ENCODE measurements at regions of chr5 and their contacts with region 1.

Region 1: DNA sequence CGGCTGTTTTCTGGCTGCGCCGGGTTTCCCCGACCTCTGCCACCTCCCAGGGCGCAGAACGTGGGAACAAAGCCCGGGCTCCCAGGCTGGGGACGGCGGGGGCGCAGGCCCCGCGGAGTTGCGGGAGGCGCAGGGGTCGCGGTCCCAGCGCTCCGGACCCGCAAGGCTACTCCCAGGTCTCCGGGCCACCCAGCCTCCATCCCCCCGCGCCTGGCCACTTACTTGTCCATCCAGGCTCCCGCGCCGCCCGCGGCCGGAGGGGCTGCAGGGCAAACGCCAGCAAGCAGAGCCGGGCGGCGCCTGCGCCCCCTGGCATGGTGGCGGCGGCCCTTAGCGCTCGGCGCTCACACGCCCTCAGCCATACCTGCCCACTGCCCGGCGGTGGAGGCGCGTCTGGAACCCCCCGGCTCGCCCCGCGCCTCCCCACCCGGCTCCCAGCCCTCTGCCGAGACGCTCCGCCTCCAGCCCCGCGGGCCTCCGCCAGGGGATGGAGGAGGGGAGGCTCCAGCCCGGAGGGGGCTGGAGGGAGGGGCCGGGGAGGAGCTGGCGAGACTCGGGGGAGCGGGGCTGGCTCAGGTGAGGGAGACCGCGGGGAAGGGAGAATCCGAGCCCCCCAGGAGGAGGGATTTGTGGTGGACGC is at the start of gene ADAM19:
- DNase-seq: peak; percentile 83
- H3K4me3 ChIP-seq: peak within 1 kb of the TSS; percentile 77 to 89 (median 79)
- H3K27ac ChIP-seq: peak within 1 kb of the TSS; percentile 91 to 95 (median 94)
- H3K4me1 ChIP-seq: peaks cover 0 to 45% (median 34%) of the 10 kb centered on the region in 4 donors
- H3K27me3 ChIP-seq: no peaks in the 10 kb centered on the region
- CTCF ChIP-seq: peak; percentile 9 to 52 (median 32)
- EP300 ChIP-seq: no peak
- POLR2A ChIP-seq: peak in 1 of 2 donors; percentile 62
- total RNA-seq, gene ADAM19: 18.8 to 53.2 (median 35.0) TPM

Region 2: GRCh38 chr5:157431544-157432200 is 143.8 kb before region 1 on chr5:
- intact Hi-C with region 1: loop called (anchors 5 kb)
- DNase-seq: no peak
- H3K4me3 ChIP-seq: no peak overlapping the region
- H3K27ac ChIP-seq: peak overlapping the region in 3 of 4 donors; percentile 7 to 41 (median 22)
- H3K4me1 ChIP-seq: no peaks in the 10 kb centered on the region
- H3K27me3 ChIP-seq: no peaks in the 10 kb centered on the region
- CTCF ChIP-seq: peak in 3 of 4 experiments; percentile 46 to 53 (median 52)
- EP300 ChIP-seq: no peak
- POLR2A ChIP-seq: no peak

Region 3: DNA sequence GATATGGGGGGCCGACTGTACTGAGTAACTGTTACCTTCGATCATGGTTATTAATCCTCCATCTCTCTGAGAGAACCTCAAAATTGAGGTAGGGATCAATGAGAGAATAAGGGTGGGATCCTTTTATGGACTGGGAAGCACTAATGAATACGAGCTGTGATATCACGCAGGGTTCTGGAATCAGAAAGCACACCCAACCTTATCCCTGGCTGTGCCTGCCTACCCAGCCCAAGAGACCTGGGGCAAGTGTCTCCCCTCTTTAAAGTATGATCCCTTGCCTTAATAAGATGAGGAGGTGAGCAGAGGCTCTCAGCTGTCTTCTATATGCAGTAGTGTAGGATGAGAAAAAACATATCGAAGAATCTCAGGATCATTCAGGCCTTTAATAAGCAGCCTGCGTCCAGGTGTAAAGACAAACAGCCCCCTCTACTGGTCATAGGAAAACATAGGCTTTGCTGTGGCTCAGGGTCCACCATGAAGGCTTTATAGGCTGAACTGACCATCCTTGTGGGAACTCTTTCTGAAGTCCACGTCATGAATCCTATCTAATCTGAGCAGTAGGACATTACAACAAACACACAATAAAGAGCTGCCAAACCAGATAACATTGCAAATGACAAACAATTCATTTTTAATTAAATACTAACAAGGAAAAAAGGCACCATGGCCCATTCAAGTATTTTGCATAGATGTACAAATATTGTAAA is 98.6 kb before region 1 on chr5:
- intact Hi-C with region 1: loop called (anchors 2 kb)
- DNase-seq: peak; percentile 67
- H3K4me3 ChIP-seq: no peak overlapping the region
- H3K27ac ChIP-seq: peak overlapping the region; percentile 38 to 88 (median 84)
- H3K4me1 ChIP-seq: peaks cover 0 to 86% (median 53%) of the 10 kb centered on the region in 4 donors
- H3K27me3 ChIP-seq: no peaks in the 10 kb centered on the region
- CTCF ChIP-seq: peak; percentile 68 to 88 (median 80)
- EP300 ChIP-seq: no peak
- POLR2A ChIP-seq: no peak

Region 4: DNA sequence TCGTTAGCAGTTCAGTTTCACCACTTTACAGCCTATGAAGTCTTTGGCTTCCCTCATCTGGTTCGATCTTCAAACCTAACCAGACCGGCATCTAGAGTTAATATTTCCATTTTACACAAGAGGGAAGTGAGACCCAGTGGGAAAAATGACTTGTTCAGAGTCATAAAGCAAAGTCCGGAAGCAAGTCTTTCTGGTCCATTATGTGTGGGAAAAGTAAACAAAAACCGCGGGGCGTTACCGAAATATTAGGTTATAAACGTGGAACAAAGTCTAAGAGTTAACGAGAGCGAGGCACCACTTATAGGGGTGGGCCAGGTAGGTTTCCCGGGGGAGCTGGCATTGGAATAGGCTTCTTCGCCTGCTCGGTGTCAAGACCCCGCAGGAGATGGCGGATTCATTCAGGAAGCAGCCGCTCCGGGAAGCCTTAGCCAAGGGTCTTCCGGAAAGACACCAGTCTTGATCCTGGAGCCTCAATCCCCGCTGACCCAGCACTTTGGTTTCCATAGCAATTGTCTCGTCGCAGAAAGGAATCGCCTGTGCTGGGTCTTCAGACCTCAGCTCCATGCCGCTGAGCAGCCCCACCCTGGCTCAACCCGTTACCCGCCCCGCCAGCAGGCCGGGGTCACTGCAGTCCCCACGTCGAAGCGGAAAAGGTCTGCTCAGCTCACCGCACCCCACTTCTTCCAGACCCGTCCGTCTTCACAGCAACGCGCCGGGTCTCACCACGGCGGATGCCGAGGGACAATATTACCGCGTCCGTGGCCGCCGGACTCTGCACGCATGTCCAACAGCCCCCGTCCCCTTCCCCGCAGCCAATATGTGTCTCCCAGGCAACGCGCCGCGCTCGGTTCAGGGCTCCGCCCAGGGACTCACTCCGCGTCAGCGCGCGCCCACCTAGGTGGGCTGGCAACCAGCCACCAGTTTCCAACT is 95.4 kb after region 1 on chr5 and contains the start of gene C5orf52:
- intact Hi-C with region 1: loop called (anchors 5 kb)
- DNase-seq: peak; percentile 81
- H3K4me3 ChIP-seq: peak within 1 kb of the TSS; percentile 45 to 65 (median 58)
- H3K27ac ChIP-seq: peak within 1 kb of the TSS in 2 of 4 donors; percentile 32 to 37
- H3K4me1 ChIP-seq: peaks cover 0 to 16% (median 12%) of the 10 kb centered on the region in 4 donors
- H3K27me3 ChIP-seq: peaks cover 0 to 17% (median 2%) of the 10 kb centered on the region in 3 donors
- CTCF ChIP-seq: no peak
- EP300 ChIP-seq: no peak
- POLR2A ChIP-seq: peak in 1 of 2 donors; percentile 44
- total RNA-seq, gene C5orf52: not detected

Measured in sigmoid colon (tissue), 7 donors.